ENCODE measurements at regions of chr1 and their contacts with region 1.

Region 1: GRCh38 chr1:37595440-37596319 is at the start of gene GNL2:
- DNase-seq: peak; percentile 99
- H3K4me3 Mint-ChIP-seq: peak within 1 kb of the TSS; percentile 99
- H3K27ac Mint-ChIP-seq: peak within 1 kb of the TSS; percentile 96
- H3K4me1 Mint-ChIP-seq: peaks cover 26% of the 10 kb centered on the region
- H3K27me3 Mint-ChIP-seq: peaks cover 6% of the 10 kb centered on the region
- total RNA-seq, gene GNL2: 109 and 110 TPM in 2 replicates

Region 2: GRCh38 chr1:37474046-37474759 is 121.5 kb before region 1 on chr1 and contains the start of gene ZC3H12A:
- intact Hi-C with region 1: loop called (anchors 2 kb)
- DNase-seq: peak; percentile 98
- H3K4me3 Mint-ChIP-seq: peak within 1 kb of the TSS; percentile 97
- H3K27ac Mint-ChIP-seq: peak within 1 kb of the TSS; percentile 98
- H3K4me1 Mint-ChIP-seq: peaks cover 41% of the 10 kb centered on the region
- H3K27me3 Mint-ChIP-seq: no peaks in the 10 kb centered on the region
- total RNA-seq, gene ZC3H12A: 39.3 and 40.4 TPM in 2 replicates

Region 3: GRCh38 chr1:37553927-37554808 is 41.5 kb before region 1 on chr1 and contains the start of gene SNIP1:
- intact Hi-C with region 1: loop called (anchors 1 kb)
- DNase-seq: peak; percentile 97
- H3K4me3 Mint-ChIP-seq: peak within 1 kb of the TSS; percentile 98
- H3K27ac Mint-ChIP-seq: peak within 1 kb of the TSS; percentile 97
- H3K4me1 Mint-ChIP-seq: peaks cover 46% of the 10 kb centered on the region
- H3K27me3 Mint-ChIP-seq: no peaks in the 10 kb centered on the region
- total RNA-seq, gene SNIP1: 22.7 and 25.4 TPM in 2 replicates

Region 4: DNA sequence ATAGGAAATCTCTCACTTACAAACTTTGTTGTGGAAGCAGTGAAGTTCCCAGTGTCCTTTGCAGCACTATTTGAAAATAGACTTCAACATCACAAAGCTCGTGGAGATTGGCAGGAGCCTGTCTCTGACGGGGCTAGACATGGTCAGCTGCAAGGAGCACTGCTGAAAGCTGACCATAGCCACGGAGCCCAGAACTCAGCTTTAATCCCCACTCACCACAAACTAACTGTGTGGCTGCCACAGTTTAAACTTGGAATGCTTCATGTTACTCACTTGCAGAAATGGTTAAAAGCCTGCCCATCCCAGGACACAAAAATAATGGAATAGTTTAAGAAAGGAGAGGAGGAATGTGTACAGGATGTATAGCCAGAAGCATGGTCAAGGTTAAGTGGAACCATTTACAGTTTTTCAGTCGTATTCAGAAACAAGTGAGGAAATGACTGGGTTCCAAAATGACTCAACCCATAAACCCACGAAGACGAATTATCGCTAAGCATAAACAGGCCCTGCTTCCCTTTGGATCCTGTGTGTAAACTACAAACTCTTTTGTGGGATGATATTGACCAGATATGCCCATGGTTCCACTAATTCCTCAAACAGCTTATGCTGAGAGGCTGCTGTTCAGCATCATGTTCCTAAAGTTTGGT is 20.7 kb before region 1 on chr1:
- intact Hi-C with region 1: loop called (anchors 2 kb)
- DNase-seq: peak; percentile 61
- H3K4me3 Mint-ChIP-seq: peak overlapping the region; percentile 61
- H3K27ac Mint-ChIP-seq: peak overlapping the region; percentile 85
- H3K4me1 Mint-ChIP-seq: peaks cover 61% of the 10 kb centered on the region
- H3K27me3 Mint-ChIP-seq: no peaks in the 10 kb centered on the region

Region 5: DNA sequence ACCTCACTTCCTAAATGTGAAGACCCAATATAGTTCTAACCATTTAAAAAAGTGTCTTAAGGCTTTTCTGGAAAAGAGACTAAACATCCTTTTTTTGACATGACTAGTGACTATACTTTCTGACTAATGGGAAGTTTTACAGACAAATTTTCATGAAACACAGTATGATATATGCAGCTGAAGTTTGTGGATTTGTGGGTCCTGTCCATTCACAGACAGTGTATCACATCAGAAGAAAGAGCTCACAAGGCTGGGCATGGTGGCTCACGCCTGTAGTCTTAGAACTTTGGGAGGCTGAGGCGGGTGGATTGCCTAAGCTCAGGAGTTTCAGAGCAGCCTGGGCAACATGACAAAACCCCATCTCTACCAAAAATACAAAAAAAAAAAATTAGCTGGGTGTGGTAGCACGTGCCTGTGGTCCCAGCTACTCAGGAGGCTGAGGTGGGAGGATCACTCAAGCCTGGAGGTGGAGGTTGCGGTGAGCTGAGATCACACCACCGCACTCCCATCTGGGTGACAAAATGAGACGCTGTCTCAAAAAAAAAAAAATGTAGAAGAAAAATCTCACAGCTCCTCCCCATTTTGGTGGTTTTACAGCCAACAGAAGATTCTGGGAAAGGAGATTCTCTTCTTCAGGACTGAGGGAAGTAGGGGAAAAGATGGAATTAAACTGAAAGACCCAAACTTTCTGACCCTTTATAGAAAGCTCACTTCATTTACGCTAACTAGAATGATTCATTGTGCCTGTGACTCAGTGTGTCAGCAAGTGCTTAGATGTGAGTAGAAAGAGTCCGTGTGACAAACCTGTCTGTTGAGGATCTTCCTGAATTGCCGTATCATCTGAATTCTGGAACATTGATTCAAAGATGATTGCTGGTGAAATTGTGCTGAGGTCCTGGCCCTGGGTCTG is 227.5 kb after region 1 on chr1:
- intact Hi-C with region 1: no loop called
- DNase-seq: no peak
- H3K4me3 Mint-ChIP-seq: no peak overlapping the region
- H3K27ac Mint-ChIP-seq: peak overlapping the region; percentile 59
- H3K4me1 Mint-ChIP-seq: peaks cover 9% of the 10 kb centered on the region
- H3K27me3 Mint-ChIP-seq: no peaks in the 10 kb centered on the region

Region 6: DNA sequence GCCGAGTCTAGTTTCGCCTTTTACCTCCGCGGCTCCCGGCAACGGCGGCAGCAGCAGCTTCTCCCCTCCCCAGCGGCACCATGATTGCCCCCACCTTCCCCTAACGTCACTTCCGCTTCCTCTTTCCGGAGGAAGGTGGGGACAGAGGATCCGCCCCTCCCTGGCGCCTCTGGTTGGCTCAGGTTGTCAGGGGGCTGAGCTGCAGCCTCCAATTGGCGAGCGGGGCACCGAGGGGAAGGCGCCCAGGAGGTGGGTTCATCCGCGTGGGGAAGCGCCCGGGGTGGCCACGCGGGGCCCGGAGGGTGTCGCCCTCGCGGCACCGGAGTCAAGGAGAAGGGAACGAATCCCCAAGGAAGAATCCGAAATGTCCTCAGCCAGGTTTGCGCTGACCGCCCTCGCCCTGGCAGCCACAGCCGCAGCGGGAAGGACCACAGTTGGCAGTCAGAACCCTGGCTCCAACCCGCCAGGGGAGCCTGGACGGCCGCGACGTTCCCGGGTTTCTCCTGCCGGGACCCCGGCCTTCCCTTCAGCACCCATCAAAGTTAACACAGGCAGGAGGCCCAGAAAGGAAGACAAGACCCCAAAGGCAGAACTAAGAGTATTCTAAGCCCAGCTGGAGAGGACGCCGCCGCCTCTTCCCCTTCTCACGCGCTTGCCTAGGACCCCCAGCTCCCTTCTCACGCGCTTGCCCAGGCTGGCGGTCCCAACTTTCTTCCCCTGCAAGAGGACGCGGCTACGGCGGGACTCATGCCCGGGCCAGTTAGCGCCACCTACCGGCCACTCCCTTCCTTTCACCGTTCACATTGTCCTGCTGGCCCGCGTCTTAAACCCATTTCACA is 264.0 kb after region 1 on chr1 and contains the start of gene MTF1:
- intact Hi-C with region 1: loop called (anchors 1 kb)
- DNase-seq: peak; percentile 99
- H3K4me3 Mint-ChIP-seq: peak within 1 kb of the TSS; percentile 89
- H3K27ac Mint-ChIP-seq: peak within 1 kb of the TSS; percentile 96
- H3K4me1 Mint-ChIP-seq: peaks cover 28% of the 10 kb centered on the region
- H3K27me3 Mint-ChIP-seq: no peaks in the 10 kb centered on the region
- total RNA-seq, gene MTF1: 31.2 and 31.6 TPM in 2 replicates

Measured in activated CD4-positive, alpha-beta T cell treated with anti-CD3 and anti-CD28 coated beads, Interleukin-2, amount 10 ng/mL, durations not matched to agents 24 days and 14 days (primary cell).